ENCODE measurements at regions of chr2 and their contacts with region 1.

Region 1: DNA sequence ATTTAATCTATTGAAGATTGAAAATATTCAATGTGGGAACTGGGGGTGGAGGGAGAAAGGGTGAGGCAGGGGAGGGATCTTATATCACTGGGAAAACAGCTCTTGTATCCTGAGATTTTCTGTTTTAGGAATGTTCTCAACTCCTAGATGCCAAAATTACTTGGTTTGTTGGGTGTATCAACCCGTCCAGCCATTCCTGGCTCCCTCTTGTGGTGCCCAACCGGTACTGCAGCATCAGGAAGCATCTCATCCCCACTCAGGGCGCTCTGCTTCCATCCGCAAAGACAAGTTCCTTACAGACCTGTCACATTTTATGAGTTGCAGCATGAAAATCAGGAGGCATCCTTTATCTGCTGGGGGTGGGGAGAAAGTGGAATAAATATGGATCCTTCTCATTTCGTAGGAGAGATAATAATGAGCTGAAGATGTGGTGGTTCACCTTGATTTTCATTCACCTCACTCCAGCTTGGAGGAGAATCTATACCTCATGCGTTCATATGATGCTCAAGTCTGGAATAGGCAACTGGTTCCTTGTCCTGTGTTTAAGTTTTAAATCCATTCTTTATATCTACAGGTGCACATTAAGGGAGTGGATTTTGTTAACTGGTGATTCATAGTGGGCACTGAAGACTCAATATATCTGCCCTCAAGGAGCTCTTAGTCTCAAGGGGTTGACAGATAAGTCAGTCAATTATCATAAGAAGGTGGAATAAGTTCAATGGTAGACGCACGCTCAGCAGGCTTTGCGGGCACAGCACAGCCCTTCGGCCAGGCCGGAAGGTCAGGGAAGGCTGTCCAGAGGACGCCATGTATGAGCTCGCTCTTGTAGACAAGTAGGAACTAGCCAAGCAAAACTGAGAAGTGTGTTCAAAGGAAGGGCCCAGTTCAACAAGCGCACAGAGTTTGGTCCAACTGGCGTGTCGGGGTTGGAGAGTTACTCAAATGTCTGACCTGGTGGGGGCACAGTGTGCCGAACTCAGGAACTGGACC is 127.3 kb downstream of the RNF144A start:
- DNase-seq: peak; percentile 81
- ATAC-seq: peak; percentile 82

Region 2: DNA sequence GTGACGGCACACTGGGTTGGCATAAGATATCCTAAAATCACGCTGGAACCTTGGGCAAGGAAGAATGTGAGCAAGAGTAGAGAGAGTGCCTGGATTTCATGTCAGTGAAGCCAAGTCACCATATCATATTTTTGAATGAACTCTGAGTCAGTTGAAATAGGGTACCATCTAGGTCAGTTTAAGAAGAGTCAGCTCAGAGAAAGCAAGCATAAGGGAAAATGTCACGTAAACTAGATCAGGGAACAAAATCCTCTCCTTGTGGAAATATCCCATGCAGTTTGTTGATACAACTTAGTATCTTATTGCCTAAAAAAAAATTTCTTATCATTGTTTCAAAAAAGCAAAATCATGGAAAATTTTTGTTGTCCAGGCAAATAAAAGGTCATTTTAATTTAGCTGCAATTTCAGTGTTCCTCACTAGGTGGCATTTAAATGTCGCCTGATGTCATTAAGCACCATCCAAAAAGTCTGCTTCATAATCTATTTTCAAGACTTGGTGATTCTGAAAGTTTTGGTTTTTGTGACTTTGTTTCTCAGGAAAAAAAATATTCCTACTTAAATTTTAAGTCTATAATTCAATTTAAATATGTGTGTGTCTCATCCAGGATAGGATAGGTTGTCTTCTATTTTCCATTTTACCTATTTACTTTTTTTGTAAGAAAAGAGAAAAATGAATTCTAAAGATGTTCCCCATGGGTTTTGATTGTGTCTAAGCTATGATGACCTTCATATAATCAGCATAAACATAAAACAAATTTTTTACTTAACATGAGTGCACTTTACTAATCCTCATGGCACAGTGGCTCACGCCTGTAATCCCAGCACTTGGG is 147.4 kb before region 1 on chr2:
- intact Hi-C with region 1: loop called (anchors 5 kb)
- DNase-seq: no peak
- ATAC-seq: peak; percentile 71

Region 3: DNA sequence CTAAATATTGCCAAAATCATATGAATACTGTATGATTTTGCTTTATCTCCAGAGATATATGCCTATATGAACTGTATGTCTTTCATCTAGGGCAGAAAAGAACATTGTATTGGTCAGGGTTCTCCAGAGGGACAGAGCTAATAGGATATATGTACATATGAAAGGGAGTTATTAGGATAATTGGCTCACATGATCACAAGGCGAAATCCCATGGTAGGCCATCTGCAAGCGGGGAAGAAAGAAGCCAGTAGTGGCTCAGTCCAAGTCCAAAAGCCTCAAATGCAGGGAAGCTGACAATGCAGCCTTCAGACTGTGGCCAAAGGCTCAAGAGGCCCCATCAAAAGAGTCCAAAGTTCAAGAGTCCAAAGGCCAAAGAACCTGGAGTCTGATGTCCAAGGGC is 82.6 kb after region 1 on chr2:
- intact Hi-C with region 1: no loop called
- DNase-seq: no peak
- ATAC-seq: no peak